SK-N-SH (cell line): ENCODE measurements at regions of chr18 and their contacts with region 1.

Region 1: DNA sequence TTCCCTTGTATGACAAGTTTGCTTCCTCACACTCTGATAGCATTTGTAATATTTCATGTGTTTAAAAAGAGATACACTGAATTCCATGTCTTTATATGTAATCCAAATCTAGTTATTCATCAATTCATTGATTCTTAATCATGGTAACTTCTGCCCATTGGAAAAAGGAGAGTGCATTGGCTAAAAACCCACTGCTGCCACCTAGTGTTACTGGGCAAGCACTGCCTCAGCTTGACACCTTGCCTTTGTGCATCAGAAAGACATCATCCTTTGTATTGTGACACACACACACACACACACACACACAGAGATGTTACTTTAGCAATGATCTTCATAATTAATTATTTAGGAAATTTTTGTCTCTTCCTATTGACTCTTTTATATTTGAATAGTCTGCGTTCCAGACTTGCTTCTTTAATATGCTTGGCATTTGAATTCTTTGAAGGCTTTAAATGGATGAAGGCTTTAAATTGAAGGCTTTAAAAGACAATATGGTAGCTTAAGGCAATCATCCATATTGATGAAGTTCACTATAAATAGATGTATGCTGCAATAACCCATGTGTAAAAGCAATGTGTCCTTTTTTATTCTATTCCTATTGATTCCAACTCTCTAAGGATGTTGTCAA is 414.2 kb upstream of the CHST9 start:
- DNase-seq: peak; percentile 24
- H3K4me3 ChIP-seq: no peak overlapping the region; a peak in 1 of 4 replicates
- H3K27ac ChIP-seq: no peak overlapping the region
- H3K4me1 ChIP-seq: no peaks in the 10 kb centered on the region; a peak in 1 of 4 replicates
- H3K27me3 ChIP-seq: no peaks in the 10 kb centered on the region
- CTCF ChIP-seq: peak; percentile 96
- EP300 ChIP-seq: no peak
- RAD21 ChIP-seq: peak; percentile 90

Region 2: GRCh38 chr18:27017901-27018500 is 581.3 kb before region 1 on chr18:
- CTCF ChIA-PET with region 1: interaction called, 12 read pairs
- POLR2A ChIA-PET with region 1: no interaction called
- DNase-seq: peak; percentile 43
- H3K4me3 ChIP-seq: peak overlapping the region in 1 of 2 experiments; percentile 18; a peak in 1 of 4 replicates
- H3K27ac ChIP-seq: no peak overlapping the region
- H3K4me1 ChIP-seq: no peaks in the 10 kb centered on the region
- H3K27me3 ChIP-seq: no peaks in the 10 kb centered on the region
- CTCF ChIP-seq: peak; percentile 68
- EP300 ChIP-seq: no peak
- RAD21 ChIP-seq: peak; percentile 87

Region 3: DNA sequence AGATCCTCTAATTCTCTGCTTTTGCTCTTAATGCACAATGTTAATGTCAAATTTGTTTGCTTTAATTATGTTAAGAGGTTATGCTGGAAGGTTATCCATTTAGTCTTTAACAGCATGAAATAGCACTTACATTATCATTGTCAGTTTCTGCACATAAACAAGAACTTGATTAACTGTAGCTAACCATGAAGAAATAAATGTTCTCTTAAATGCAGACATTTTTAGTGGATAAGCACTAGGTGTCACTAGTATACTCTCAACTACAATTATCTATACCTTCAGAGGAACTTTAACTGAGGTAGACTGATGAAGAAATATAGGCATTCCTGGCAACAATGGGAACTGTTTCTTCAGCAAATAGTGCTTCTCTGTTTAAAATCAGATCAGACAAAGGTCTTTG is 235.4 kb before region 1 on chr18:
- CTCF ChIA-PET with region 1: interaction called, 24 read pairs
- POLR2A ChIA-PET with region 1: no interaction called
- DNase-seq: peak; percentile 16
- H3K4me3 ChIP-seq: no peak overlapping the region
- H3K27ac ChIP-seq: no peak overlapping the region
- H3K4me1 ChIP-seq: no peaks in the 10 kb centered on the region
- H3K27me3 ChIP-seq: no peaks in the 10 kb centered on the region
- CTCF ChIP-seq: peak; percentile 60
- EP300 ChIP-seq: no peak
- RAD21 ChIP-seq: peak; percentile 67

Region 4: GRCh38 chr18:27585601-27586173 is 13.6 kb before region 1 on chr18:
- CTCF ChIA-PET with region 1: interaction called, 14 read pairs
- POLR2A ChIA-PET with region 1: no interaction called
- DNase-seq: no peak
- H3K4me3 ChIP-seq: no peak overlapping the region
- H3K27ac ChIP-seq: no peak overlapping the region
- H3K4me1 ChIP-seq: no peaks in the 10 kb centered on the region; a peak in 1 of 4 replicates
- H3K27me3 ChIP-seq: no peaks in the 10 kb centered on the region
- CTCF ChIP-seq: no peak
- EP300 ChIP-seq: no peak
- RAD21 ChIP-seq: no peak

Region 5: DNA sequence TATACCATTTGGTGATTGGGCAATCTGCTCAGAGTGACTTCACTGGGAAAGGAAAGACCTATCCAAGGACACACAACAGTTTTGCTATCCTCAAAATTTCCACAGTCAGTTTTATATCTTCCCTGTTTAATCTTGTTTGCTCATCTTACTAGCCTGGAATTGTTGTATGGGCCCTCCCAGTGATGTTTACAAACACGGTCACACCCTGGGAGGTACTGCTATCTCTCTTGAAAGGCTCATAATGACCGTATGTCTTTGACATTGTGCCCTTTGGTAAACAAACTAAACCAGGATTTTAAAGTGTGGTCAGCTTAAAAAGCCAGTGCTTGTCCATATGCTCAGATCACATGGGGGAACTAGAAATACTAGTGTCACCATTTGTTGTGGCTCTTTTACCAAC is 300.6 kb after region 1 on chr18:
- CTCF ChIA-PET with region 1: no interaction called
- POLR2A ChIA-PET with region 1: no interaction called
- DNase-seq: no peak
- H3K4me3 ChIP-seq: no peak overlapping the region
- H3K27ac ChIP-seq: no peak overlapping the region
- H3K4me1 ChIP-seq: no peaks in the 10 kb centered on the region; a peak in 1 of 4 replicates
- H3K27me3 ChIP-seq: no peaks in the 10 kb centered on the region
- CTCF ChIP-seq: no peak
- EP300 ChIP-seq: no peak
- RAD21 ChIP-seq: no peak